ENCODE measurements at regions of chr1 and their contacts with region 1.

Region 1: DNA sequence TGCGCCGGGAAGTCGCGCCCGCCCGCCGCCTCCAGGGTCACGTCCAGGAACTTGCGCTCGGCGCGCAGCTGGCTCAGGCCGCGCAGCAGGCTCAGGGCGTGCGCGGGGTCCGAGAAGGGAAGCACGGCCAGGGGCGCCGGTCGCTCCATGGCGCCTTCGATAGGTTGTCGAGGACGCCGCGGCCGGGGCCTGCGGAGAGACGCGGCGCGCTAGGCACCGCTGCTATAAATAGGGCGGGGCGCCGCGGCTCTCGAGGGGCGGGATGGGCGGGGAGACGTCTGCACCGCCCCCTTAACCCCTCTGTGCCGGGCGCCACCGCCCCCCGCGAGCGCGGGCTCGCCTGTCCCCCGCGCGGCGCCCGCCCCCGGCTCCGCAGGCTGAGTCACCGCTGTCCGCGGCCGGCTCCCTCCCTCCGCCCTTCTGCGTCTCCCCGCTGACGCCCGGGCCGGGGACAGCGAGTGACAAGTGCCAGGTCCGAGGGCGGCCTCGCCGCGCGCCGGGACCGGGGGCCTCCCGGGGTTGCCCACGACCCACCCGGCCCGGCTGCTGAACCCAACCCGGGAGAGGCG is at the start of gene KLHL21:
- DNase-seq: peak; percentile 86 to 90
- H3K4me3 ChIP-seq: peak within 1 kb of the TSS; percentile 56
- H3K4me3 Mint-ChIP-seq: peak within 1 kb of the TSS; percentile 96
- H3K27ac Mint-ChIP-seq: peak within 1 kb of the TSS; percentile 97
- H3K4me1 ChIP-seq: peaks cover 9% of the 10 kb centered on the region; the same call in 1 of the 2 replicates
- H3K4me1 Mint-ChIP-seq: no peaks in the 10 kb centered on the region
- H3K27me3 ChIP-seq: no peaks in the 10 kb centered on the region
- H3K27me3 Mint-ChIP-seq: no peaks in the 10 kb centered on the region
- CTCF ChIP-seq: no peak
- total RNA-seq, gene KLHL21: 21.6 and 22.4 TPM in 2 replicates

Region 2: DNA sequence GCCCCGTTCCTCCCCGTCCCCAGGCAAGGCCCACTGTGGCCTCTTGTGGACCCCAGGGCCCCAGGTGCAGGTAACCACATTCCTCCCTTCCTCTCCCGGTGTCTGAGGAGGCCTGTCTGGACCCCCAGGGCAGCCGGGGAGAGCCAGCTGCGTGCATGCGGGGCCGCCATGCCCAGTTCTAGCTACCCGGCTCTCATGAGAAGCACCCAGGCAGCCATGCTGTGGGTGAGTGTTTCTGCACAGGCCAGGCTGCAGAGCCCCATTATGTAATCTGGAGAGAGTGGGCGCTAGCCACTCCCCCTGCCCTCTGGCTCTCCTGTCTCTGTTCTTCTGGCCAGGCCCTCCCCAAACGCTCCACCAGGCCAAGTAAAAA is 92.8 kb before region 1 on chr1:
- CTCF ChIA-PET with region 1: no interaction called
- POLR2A ChIA-PET with region 1: no interaction called
- intact Hi-C with region 1: no loop called
- DNase-seq: no peak
- H3K4me3 ChIP-seq: no peak overlapping the region
- H3K4me3 Mint-ChIP-seq: no peak overlapping the region
- H3K27ac Mint-ChIP-seq: no peak overlapping the region
- H3K4me1 ChIP-seq: no peaks in the 10 kb centered on the region; the same call in 1 of the 2 replicates
- H3K4me1 Mint-ChIP-seq: no peaks in the 10 kb centered on the region
- H3K27me3 ChIP-seq: no peaks in the 10 kb centered on the region
- H3K27me3 Mint-ChIP-seq: no peaks in the 10 kb centered on the region
- CTCF ChIP-seq: no peak

Region 3: GRCh38 chr1:6554031-6554906 is 48.5 kb before region 1 on chr1 and contains the start of gene NOL9:
- CTCF ChIA-PET with region 1: interaction called, 3 read pairs
- POLR2A ChIA-PET with region 1: interaction called, 5 read pairs
- intact Hi-C with region 1: loop called (anchors 10 kb)
- DNase-seq: peak; percentile 91 to 94
- H3K4me3 ChIP-seq: peak within 1 kb of the TSS; percentile 96
- H3K4me3 Mint-ChIP-seq: peak within 1 kb of the TSS; percentile 72
- H3K27ac Mint-ChIP-seq: no peak within 1 kb of the TSS
- H3K4me1 ChIP-seq: peaks cover 5% of the 10 kb centered on the region; the same call in 1 of the 2 replicates
- H3K4me1 Mint-ChIP-seq: peaks cover 5% of the 10 kb centered on the region
- H3K27me3 ChIP-seq: no peaks in the 10 kb centered on the region
- H3K27me3 Mint-ChIP-seq: no peaks in the 10 kb centered on the region
- CTCF ChIP-seq: peak; percentile 86 to 89
- total RNA-seq, gene NOL9: 33.6 and 37.3 TPM in 2 replicates

Region 4: DNA sequence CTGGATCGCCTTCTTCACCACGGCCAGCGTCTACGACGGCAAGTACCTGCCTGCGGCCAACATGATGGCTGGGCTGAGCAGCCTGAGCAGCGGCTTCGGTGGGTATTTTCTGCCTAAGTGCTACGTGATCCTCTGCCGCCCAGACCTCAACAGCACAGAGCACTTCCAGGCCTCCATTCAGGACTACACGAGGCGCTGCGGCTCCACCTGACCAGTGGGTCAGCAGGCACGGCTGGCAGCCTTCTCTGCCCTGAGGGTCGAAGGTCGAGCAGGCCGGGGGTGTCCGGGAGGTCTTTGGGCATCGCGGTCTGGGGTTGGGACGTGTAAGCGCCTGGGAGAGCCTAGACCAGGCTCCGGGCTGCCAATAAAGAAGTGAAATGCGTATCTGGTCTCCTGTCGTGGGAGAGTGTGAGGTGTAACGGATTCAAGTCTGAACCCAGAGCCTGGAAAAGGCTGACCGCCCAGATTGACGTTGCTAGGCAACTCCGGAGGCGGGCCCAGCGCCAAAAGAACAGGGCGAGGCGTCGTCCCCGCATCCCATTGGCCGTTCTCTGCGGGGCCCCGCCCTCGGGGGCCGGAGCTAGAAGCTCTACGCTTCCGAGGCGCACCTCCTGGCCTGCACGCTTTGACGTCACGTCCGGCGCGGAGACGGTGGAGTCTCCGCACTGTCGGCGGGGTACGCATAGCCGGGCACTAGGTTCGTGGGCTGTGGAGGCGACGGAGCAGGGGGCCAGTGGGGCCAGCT is 23.2 kb before region 1 on chr1 and contains the start of gene ZBTB48:
- CTCF ChIA-PET with region 1: no interaction called
- POLR2A ChIA-PET with region 1: interaction called, 8 read pairs
- intact Hi-C with region 1: loop called (anchors 1 kb)
- DNase-seq: peak; percentile 96 to 97
- H3K4me3 ChIP-seq: peak within 1 kb of the TSS; percentile 93
- H3K4me3 Mint-ChIP-seq: peak within 1 kb of the TSS; percentile 87
- H3K27ac Mint-ChIP-seq: peak within 1 kb of the TSS; percentile 96
- H3K4me1 ChIP-seq: peaks cover 28% of the 10 kb centered on the region
- H3K4me1 Mint-ChIP-seq: no peaks in the 10 kb centered on the region
- H3K27me3 ChIP-seq: no peaks in the 10 kb centered on the region
- H3K27me3 Mint-ChIP-seq: no peaks in the 10 kb centered on the region
- CTCF ChIP-seq: no peak
- total RNA-seq, gene ZBTB48: 22.5 and 24.8 TPM in 2 replicates

Region 5: DNA sequence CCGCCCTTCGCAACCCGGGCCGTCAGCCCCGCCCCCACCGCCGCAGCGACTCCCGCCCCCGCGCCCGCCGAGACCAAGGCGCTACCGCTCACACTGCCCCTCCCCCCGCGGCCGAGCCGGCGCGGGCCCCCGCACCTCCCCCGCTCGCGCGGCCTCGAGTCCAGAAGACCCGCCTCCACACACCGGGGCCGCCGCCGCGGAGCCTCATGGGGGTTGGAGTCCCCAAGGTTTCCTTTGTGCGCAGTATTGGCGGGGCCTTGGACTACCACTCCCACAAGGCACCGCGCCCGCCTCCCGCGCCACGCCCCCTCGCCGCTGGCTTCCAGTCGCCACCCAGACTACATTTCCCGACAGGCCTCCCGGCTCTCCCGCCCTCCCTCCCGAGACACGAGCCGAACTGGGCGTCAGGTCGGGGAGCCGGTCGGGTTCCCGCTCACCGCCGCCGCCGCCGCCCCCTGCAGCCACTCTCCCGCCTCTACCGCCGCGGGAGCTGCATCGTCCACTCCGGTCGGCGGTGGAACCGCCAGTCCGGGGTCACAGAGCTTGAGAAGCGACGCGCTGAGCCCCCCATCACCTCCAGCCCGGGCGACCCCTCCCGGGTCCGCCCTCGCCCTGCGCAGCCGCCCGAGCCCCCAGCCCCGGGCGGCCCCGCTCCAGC is 10.7 kb after region 1 on chr1 and contains the start of gene PHF13:
- CTCF ChIA-PET with region 1: no interaction called
- POLR2A ChIA-PET with region 1: interaction called, 3 read pairs
- intact Hi-C with region 1: loop called (anchors 1 kb)
- DNase-seq: peak; percentile 99
- H3K4me3 ChIP-seq: peak within 1 kb of the TSS; percentile 76
- H3K4me3 Mint-ChIP-seq: peak within 1 kb of the TSS; percentile 93
- H3K27ac Mint-ChIP-seq: peak within 1 kb of the TSS; percentile 64
- H3K4me1 ChIP-seq: peaks cover 6% of the 10 kb centered on the region; the same call in 1 of the 2 replicates
- H3K4me1 Mint-ChIP-seq: peaks cover 6% of the 10 kb centered on the region
- H3K27me3 ChIP-seq: no peaks in the 10 kb centered on the region
- H3K27me3 Mint-ChIP-seq: no peaks in the 10 kb centered on the region
- CTCF ChIP-seq: no peak
- total RNA-seq, gene PHF13: 20.0 and 21.8 TPM in 2 replicates

Region 6: DNA sequence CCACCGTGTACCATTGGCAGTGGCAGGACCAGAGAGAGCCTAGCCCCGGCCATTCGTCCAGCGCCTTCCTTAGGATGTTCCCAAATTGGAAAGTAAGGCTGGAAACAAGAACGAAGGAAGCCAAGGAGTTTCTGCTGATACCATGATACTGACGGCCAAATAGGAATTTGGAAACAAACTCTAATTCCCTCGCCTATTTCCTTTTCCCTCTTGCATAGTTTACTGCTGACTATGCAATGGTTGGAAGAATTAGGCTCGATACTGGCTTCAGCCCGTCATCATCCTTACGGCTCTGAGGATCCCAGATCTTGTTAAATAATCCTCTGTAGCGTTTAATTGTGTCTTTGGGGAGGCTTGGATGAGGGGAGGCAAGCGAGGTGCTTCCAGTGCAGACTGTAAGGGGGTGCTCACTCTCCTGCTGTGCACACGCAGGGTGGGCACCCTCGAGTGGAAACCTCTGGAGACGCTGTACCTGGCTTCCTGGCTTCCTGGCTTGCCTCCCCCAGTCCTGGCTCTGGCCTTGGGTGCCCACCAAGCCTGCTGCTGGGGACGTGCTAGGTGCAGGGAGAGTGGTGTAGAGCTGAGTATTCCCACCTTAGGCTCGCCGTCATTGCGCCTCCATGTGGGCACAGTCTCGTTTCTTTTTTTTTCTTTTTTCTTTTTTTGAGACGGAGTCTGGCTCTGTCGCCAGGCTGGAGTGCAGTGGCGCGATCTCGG is 155.1 kb after region 1 on chr1:
- CTCF ChIA-PET with region 1: no interaction called
- POLR2A ChIA-PET with region 1: no interaction called
- intact Hi-C with region 1: no loop called
- DNase-seq: no peak
- H3K4me3 ChIP-seq: no peak overlapping the region
- H3K4me3 Mint-ChIP-seq: no peak overlapping the region
- H3K27ac Mint-ChIP-seq: no peak overlapping the region
- H3K4me1 ChIP-seq: no peaks in the 10 kb centered on the region
- H3K4me1 Mint-ChIP-seq: no peaks in the 10 kb centered on the region
- H3K27me3 ChIP-seq: no peaks in the 10 kb centered on the region
- H3K27me3 Mint-ChIP-seq: peaks cover 14% of the 10 kb centered on the region
- CTCF ChIP-seq: no peak

Measured in Caco-2 (cell line).